Aorta (tissue), 5 donors: ENCODE measurements at regions of chrX and their contacts with region 1.

Region 1: DNA sequence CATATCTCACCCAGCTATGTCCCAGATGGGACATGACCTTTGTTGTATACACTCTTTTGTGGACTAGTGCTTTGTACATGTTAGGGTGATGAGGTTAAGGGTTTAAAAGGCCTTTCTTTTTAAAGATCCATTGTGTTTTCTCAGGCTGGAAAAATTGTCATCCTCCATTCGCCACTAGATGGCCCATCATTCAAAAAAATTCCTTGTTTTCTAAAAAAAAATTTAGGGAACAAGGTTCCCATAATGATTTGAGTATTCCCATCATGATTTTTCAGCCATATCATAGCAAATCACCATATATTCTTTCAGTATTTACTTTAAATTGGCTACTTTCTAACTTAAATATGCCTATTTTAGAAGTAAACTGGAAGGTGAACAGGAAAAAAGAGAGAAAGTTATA is 91.9 kb upstream of the TMEM164 start:
- DNase-seq: no peak
- ATAC-seq: no peak
- H3K4me3 ChIP-seq: no peak overlapping the region
- H3K27ac ChIP-seq: no peak overlapping the region
- H3K4me1 ChIP-seq: no peaks in the 10 kb centered on the region
- H3K27me3 ChIP-seq: no peaks in the 10 kb centered on the region

Region 2: DNA sequence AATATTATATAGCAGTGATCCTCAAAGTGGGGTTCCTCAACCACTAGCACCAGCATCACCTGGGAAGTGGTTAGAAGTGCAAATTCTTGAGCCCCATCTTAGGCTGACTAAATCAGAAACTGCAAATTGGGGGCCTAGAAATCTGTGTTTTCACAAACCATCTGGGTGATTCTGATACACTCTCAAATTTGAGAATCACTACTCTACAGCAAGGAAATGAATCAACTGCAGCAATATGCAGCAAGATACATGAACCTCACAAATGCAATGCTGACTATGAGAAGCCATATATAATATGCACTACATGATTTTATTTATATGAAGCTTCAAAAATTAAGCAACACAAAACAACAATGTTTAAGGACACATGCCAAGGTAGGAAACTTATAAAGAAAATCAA is 1138.5 kb before region 1 on chrX:
- intact Hi-C with region 1: no loop called
- DNase-seq: no peak
- ATAC-seq: no peak
- H3K4me3 ChIP-seq: no peak overlapping the region
- H3K27ac ChIP-seq: no peak overlapping the region
- H3K4me1 ChIP-seq: no peaks in the 10 kb centered on the region
- H3K27me3 ChIP-seq: no peaks in the 10 kb centered on the region

Region 3: DNA sequence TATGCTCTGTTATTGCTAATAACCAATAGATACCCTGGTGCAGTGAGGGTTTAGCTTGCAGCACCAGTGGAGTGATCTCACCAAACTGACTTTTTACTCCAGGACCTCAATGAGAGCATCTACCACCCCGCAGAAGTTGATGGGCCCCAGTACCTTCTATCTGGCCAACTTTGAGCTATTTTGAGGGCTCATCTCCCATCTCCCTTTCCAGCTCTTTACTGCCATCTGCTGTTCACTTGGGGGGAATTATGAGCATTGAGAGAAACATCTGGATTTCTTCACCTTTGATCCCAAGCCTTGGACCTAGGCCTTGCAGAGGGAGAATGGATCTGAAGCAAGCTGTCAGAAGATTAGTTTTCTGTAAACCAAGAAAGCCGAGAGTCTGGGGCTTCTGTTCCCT is 235.5 kb after region 1 on chrX:
- intact Hi-C with region 1: loop called (anchors 5 kb)
- DNase-seq: no peak
- ATAC-seq: peak; percentile 77
- H3K4me3 ChIP-seq: no peak overlapping the region
- H3K27ac ChIP-seq: no peak overlapping the region
- H3K4me1 ChIP-seq: peaks cover 0 to 2% of the 10 kb centered on the region in 2 donors
- H3K27me3 ChIP-seq: no peaks in the 10 kb centered on the region

Region 4: DNA sequence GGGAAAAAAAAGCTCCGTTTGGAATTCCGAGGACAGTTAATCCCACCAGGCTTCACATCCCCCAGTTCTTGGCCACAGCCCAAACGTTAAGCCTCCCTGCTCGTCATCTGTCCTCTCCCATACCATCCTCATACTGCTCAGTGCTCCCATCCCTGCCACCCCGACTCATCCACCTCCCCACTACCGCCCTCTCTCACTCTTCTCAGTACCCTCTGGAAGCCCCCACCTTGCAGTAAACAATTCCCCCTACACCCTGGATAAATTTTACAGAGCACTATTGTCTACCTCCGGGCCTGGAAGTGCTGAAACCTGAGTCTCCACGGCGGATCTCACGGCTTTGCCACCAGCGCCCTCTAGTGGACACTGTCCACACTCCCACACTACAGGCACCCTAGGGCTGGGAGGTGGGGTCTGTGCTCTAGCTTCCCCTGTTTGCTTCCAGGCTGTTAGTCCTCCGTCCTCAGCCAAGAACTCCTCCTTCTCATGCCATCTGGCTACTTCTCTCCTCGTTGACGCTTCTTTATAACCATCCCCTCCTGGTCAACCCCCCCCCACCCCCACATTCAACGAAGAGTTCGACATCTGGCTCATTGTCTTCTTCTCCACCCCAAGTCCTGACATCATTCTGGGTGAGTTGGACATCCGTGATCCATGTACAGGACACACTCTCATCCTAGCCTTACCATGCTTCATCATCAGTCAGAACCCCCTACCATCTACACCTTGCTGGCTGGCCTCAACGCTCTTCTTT is 502.1 kb after region 1 on chrX:
- intact Hi-C with region 1: loop called in 1 of 2 experiments (anchors 5 kb)
- DNase-seq: peak; percentile 74 to 87
- ATAC-seq: peak; percentile 82
- H3K4me3 ChIP-seq: no peak overlapping the region
- H3K27ac ChIP-seq: no peak overlapping the region
- H3K4me1 ChIP-seq: peaks cover 0 to 3% of the 10 kb centered on the region in 2 donors
- H3K27me3 ChIP-seq: no peaks in the 10 kb centered on the region